A673 (cell line): ENCODE measurements at regions of chr4 and their contacts with region 1.

Region 1: DNA sequence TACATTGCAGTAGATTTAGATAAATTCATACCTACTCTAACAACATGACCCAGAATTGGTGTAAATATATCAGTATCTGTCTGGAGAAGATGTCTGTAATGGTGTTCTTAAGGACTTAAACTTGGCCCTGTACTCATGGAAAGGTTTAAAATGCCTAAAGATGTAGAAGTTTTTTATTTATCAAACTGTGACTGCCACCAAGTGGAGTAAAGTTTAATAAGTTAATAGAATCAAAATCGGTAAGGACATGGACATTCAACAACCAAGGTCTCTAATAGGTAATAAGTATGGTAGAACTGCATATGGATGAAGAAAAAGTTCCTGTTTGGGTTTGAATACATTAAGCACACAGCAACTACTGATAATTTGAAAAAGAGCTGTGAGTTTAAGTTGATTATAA is 474.0 kb upstream of the NDST3 start:
- DNase-seq: peak; percentile 63
- H3K4me3 ChIP-seq: no peak overlapping the region
- H3K27ac ChIP-seq: no peak overlapping the region
- H3K4me1 ChIP-seq: no peaks in the 10 kb centered on the region
- H3K27me3 ChIP-seq: no peaks in the 10 kb centered on the region
- CTCF ChIP-seq: peak; percentile 40

Region 2: DNA sequence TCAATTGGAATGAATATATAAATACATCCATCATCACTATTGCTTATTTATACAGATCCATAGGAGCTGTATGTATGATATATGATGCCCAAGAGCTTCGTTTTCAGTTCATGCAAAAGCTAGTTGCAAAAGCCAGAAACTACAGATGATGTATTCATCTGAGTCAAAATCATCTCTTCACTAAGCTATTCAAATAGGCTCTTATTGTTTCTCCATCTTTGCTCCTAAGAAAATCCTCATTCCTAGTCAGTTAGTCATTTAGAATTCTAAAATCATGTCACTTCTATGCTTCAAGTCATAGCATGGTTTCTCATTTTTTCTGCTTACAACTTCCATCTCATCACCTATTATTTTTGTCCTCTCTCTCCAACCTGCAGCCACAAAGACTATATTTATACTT is 174.8 kb before region 1 on chr4:
- CTCF ChIA-PET with region 1: no interaction called
- POLR2A ChIA-PET with region 1: no interaction called
- intact Hi-C with region 1: no loop called
- DNase-seq: no peak
- H3K4me3 ChIP-seq: no peak overlapping the region
- H3K27ac ChIP-seq: no peak overlapping the region
- H3K4me1 ChIP-seq: no peaks in the 10 kb centered on the region
- H3K27me3 ChIP-seq: no peaks in the 10 kb centered on the region
- CTCF ChIP-seq: no peak

Region 3: GRCh38 chr4:118034053-118034785 is 473.9 kb after region 1 on chr4 and contains the start of gene NDST3:
- CTCF ChIA-PET with region 1: no interaction called
- POLR2A ChIA-PET with region 1: no interaction called
- intact Hi-C with region 1: loop called (anchors 5 kb)
- DNase-seq: peak; percentile 89
- H3K4me3 ChIP-seq: peak within 1 kb of the TSS; percentile 70
- H3K27ac ChIP-seq: no peak within 1 kb of the TSS
- H3K4me1 ChIP-seq: peaks cover 6% of the 10 kb centered on the region
- H3K27me3 ChIP-seq: no peaks in the 10 kb centered on the region
- CTCF ChIP-seq: peak; percentile 77
- total RNA-seq, gene NDST3: 2.6 and 3.0 TPM in 2 replicates